GM23248 (cell line): ENCODE measurements at regions of chr12 and their contacts with region 1.

Region 1: GRCh38 chr12:32755654-32756475 is at the start of gene YARS2:
- DNase-seq: peak; percentile 99
- H3K4me3 ChIP-seq: peak within 1 kb of the TSS; percentile 99
- H3K27ac ChIP-seq: peak within 1 kb of the TSS; percentile 94
- H3K4me1 ChIP-seq: peaks cover 16% of the 10 kb centered on the region; the same call in 1 of the 2 replicates
- H3K27me3 ChIP-seq: no peaks in the 10 kb centered on the region
- total RNA-seq, gene YARS2: 25.4 and 33.1 TPM in 2 replicates

Region 2: DNA sequence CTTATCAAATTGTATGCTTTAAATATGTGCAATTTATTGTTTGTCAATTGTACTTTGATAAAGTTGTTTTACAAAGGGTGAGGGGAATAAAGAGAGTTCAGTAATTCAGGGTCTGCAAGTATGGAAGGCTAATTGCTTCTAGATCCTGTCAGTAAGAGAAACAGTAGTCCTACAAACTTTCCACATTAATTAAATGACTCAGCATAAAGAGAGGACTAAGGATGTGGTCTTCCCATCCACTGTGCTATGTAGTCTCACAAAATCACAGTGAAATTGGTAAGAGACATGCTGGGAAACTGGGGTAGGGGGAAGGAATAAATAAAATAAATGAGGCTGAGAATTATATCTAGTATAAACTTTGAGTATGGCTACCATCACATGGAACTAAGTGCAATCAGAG is 270.9 kb after region 1 on chr12:
- in situ Hi-C with region 1: no loop called
- DNase-seq: no peak
- H3K4me3 ChIP-seq: no peak overlapping the region
- H3K27ac ChIP-seq: no peak overlapping the region
- H3K4me1 ChIP-seq: no peaks in the 10 kb centered on the region
- H3K27me3 ChIP-seq: no peaks in the 10 kb centered on the region

Region 3: DNA sequence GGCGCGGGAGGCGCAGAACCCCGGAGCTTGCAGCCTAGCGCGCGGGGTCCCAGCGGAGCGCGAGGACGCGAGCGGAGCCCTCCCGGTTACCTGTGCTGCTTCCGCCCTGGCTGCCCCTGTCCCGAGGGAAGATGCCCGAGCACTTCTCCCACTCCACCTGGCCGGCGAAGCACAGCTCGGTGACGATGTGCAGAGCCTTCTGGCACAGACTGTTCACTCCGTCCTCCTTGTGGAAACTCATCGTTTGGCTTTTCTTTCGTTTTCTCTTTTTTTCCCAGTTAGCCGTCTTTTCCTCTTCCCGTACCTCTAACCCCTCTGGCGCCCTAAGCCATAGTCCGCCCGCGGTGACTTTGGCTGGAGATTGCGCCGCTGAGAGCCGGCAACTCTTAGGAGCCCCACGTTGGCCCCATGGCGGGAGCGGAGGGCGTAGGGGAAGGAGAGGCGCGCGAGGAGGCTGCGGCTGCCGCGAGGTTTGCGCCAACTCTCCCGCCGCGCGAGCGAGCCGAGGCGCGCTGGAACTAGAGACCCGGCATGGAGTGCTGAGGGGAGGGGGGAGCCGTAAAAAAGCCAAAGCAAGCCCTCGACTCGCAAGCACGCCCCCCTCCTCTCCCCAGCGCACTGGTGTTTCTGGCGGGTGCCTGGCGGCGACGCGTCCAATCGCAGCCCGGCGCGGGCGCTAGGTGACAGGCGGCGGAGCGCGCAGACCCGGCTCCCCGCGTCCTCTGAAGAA is 683.6 kb after region 1 on chr12 and contains the start of gene SYT10:
- in situ Hi-C with region 1: loop called (anchors 25 kb)
- DNase-seq: peak; percentile 22
- H3K4me3 ChIP-seq: peak within 1 kb of the TSS; percentile 74
- H3K27ac ChIP-seq: no peak within 1 kb of the TSS
- H3K4me1 ChIP-seq: no peaks in the 10 kb centered on the region
- H3K27me3 ChIP-seq: peaks cover 38% of the 10 kb centered on the region
- total RNA-seq, gene SYT10: not detected in 2 replicates